Ascending aorta (tissue), 2 donors: ENCODE measurements at regions of chr1 and their contacts with region 1.

Region 1: DNA sequence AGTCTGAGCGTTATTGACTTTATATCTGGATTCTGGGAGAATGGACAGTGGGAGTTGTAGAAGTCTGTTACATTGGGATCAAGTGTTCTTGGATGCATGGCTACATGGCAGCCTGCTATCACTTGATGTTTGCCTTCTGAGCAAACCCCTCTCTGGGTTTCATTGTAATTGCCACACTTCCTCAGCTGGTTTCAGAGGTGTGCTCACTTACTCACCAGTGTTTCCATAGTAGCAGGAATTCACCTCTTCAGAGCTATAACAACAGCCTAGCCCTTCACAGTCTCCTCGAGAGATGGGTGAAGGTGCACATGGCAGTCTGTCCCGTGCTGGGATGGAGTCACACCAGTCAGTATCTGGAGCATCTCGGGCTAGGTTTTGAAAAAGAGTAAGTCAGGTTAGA is 2.6 kb downstream of the ZP4 start:
- DNase-seq: no peak
- H3K4me3 ChIP-seq: no peak overlapping the region
- H3K27ac ChIP-seq: no peak overlapping the region
- H3K4me1 ChIP-seq: no peaks in the 10 kb centered on the region
- H3K27me3 ChIP-seq: no peaks in the 10 kb centered on the region
- CTCF ChIP-seq: no peak

Region 2: GRCh38 chr1:237838904-237839534 is 49.1 kb before region 1 on chr1:
- intact Hi-C with region 1: loop called (anchors 2 kb)
- DNase-seq: no peak
- H3K4me3 ChIP-seq: no peak overlapping the region
- H3K27ac ChIP-seq: no peak overlapping the region
- H3K4me1 ChIP-seq: no peaks in the 10 kb centered on the region
- H3K27me3 ChIP-seq: no peaks in the 10 kb centered on the region
- CTCF ChIP-seq: no peak

Region 3: DNA sequence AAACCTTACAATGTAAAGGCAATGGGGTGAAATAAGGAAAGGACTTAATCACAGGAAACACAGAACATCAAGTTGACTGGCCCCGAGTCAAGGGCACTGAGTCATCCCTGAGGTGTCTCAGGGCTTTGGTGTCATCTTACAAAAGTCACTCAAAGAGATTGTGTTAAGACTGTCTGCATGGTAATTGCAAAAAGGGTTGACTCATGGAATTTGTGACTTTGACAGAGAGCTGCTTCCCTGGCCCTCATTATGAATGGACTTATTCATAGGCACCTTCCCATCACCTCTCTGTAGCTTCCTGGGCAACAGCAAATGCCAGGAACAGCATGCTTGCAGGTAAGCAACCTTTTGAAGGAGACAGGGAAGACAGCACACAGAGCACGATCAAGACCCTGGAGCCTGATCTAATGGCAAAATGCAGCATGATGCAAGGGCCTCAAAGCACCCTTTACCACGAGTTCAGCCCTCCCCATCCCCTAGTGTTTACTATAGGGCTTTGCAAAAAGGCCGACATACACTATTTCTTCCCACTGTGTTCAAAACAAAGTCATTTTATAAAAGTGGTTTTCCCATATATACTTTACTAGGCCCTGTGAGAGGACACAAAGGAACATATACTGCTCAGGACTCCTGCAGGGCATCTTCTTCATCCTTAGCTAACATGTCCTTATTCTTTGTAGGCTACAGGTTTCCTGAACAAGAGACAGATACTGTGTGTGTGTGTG is 14.5 kb before region 1 on chr1:
- intact Hi-C with region 1: no loop called
- DNase-seq: no peak
- H3K4me3 ChIP-seq: no peak overlapping the region
- H3K27ac ChIP-seq: no peak overlapping the region
- H3K4me1 ChIP-seq: no peaks in the 10 kb centered on the region
- H3K27me3 ChIP-seq: no peaks in the 10 kb centered on the region
- CTCF ChIP-seq: no peak